ENCODE measurements at regions of chr14 and their contacts with region 1.

Region 1: GRCh38 chr14:57317316-57317715 is 48.5 kb downstream of the AP5M1 start:
- DNase-seq: peak; percentile 30 to 85 (median 58)
- ATAC-seq: peak; percentile 48 to 64 (median 56)
- H3K4me3 ChIP-seq: no peak overlapping the region
- H3K4me3 Mint-ChIP-seq: no peak overlapping the region
- H3K27ac ChIP-seq: no peak overlapping the region
- H3K27ac Mint-ChIP-seq: no peak overlapping the region
- H3K4me1 ChIP-seq: no peaks in the 10 kb centered on the region
- H3K4me1 Mint-ChIP-seq: peaks cover 3 to 5% (median 4%) of the 10 kb centered on the region in 3 donors
- H3K27me3 ChIP-seq: peaks cover 0 to 2% of the 10 kb centered on the region in 2 experiments
- H3K27me3 Mint-ChIP-seq: peaks cover 0 to 2% of the 10 kb centered on the region in 2 donors

Region 2: GRCh38 chr14:56491299-56492285 is 825.7 kb before region 1 on chr14:
- CTCF ChIA-PET with region 1: interaction called, 4 to 22 read pairs
- POLR2A ChIA-PET with region 1: no interaction called
- DNase-seq: peak in 24 of 35 experiments; percentile 1 to 58 (median 9)
- ATAC-seq: peak; percentile 40 to 61 (median 50)
- H3K4me3 ChIP-seq: no peak overlapping the region
- H3K4me3 Mint-ChIP-seq: peak overlapping the region in 2 of 3 donors; percentile 6 to 28
- H3K27ac ChIP-seq: no peak overlapping the region
- H3K27ac Mint-ChIP-seq: no peak overlapping the region
- H3K4me1 ChIP-seq: peaks cover 2 to 4% of the 10 kb centered on the region in 2 experiments
- H3K4me1 Mint-ChIP-seq: peaks cover 8 to 14% (median 9%) of the 10 kb centered on the region in 3 donors
- H3K27me3 ChIP-seq: no peaks in the 10 kb centered on the region
- H3K27me3 Mint-ChIP-seq: peaks cover 0 to 8% of the 10 kb centered on the region in 2 donors

Region 3: DNA sequence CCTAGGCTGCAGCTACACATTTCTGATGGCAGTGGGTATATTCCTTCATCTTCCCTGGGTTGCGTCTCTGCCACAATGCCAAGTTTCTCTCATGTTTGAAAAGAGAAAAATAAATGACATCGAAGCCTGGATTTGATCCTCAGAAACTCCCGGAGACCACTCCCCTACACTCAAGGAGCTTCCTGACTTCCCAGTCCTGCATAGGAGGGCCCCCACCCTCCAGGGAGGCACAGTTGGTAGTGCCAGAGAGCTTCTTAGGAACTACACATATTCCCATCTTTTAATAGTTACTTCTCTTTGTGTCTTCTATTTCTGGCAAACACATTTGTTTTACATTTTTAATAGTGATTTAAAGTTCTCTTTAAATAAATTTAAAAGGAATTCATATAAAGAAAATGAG is 17.8 kb before region 1 on chr14:
- CTCF ChIA-PET with region 1: interaction called in 1 of 2 experiments, 18 read pairs
- POLR2A ChIA-PET with region 1: no interaction called
- DNase-seq: no peak
- ATAC-seq: no peak
- H3K4me3 ChIP-seq: no peak overlapping the region
- H3K4me3 Mint-ChIP-seq: no peak overlapping the region
- H3K27ac ChIP-seq: no peak overlapping the region
- H3K27ac Mint-ChIP-seq: no peak overlapping the region
- H3K4me1 ChIP-seq: no peaks in the 10 kb centered on the region
- H3K4me1 Mint-ChIP-seq: no peaks in the 10 kb centered on the region
- H3K27me3 ChIP-seq: peaks cover 0 to 2% of the 10 kb centered on the region in 2 experiments
- H3K27me3 Mint-ChIP-seq: peaks cover 0 to 2% of the 10 kb centered on the region in 2 donors

Region 4: GRCh38 chr14:58138714-58139482 is 821.6 kb after region 1 on chr14:
- CTCF ChIA-PET with region 1: no interaction called
- POLR2A ChIA-PET with region 1: interaction called in 1 of 2 experiments, 10 read pairs
- DNase-seq: no peak
- ATAC-seq: no peak
- H3K4me3 ChIP-seq: no peak overlapping the region
- H3K4me3 Mint-ChIP-seq: no peak overlapping the region
- H3K27ac ChIP-seq: no peak overlapping the region
- H3K27ac Mint-ChIP-seq: no peak overlapping the region
- H3K4me1 ChIP-seq: no peaks in the 10 kb centered on the region
- H3K4me1 Mint-ChIP-seq: no peaks in the 10 kb centered on the region
- H3K27me3 ChIP-seq: peaks cover 0 to 10% of the 10 kb centered on the region in 2 experiments
- H3K27me3 Mint-ChIP-seq: peaks cover 0 to 8% of the 10 kb centered on the region in 2 donors

Measured in T-cell (primary cell).